Heart left ventricle (tissue), 16 donors: ENCODE measurements at regions of chr10 and their contacts with region 1.

Region 1: GRCh38 chr10:122419876-122420623 is 34.4 kb upstream of the ARMS2 start:
- DNase-seq: peak in 2 of 5 donors; percentile 26 to 46
- ATAC-seq: peak in 3 of 4 donors; percentile 37 to 65 (median 63)
- H3K4me3 ChIP-seq: no peak overlapping the region
- H3K27ac ChIP-seq: peak overlapping the region in 2 of 12 donors; percentile 32 to 34
- H3K4me1 ChIP-seq: peaks cover 0 to 66% (median 11%) of the 10 kb centered on the region in 12 donors
- H3K27me3 ChIP-seq: no peaks in the 10 kb centered on the region
- CTCF ChIP-seq: no peak
- POLR2A ChIP-seq: no peak

Region 2: GRCh38 chr10:122388287-122388997 is 31.6 kb before region 1 on chr10:
- intact Hi-C with region 1: loop called in 1 of 10 experiments (anchors 5 kb)
- DNase-seq: no peak
- ATAC-seq: no peak
- H3K4me3 ChIP-seq: no peak overlapping the region
- H3K27ac ChIP-seq: no peak overlapping the region
- H3K4me1 ChIP-seq: peaks cover 0 to 47% (median 31%) of the 10 kb centered on the region in 12 donors
- H3K27me3 ChIP-seq: no peaks in the 10 kb centered on the region
- CTCF ChIP-seq: no peak
- POLR2A ChIP-seq: no peak